ENCODE measurements at regions of chr5 and their contacts with region 1.

Region 1: DNA sequence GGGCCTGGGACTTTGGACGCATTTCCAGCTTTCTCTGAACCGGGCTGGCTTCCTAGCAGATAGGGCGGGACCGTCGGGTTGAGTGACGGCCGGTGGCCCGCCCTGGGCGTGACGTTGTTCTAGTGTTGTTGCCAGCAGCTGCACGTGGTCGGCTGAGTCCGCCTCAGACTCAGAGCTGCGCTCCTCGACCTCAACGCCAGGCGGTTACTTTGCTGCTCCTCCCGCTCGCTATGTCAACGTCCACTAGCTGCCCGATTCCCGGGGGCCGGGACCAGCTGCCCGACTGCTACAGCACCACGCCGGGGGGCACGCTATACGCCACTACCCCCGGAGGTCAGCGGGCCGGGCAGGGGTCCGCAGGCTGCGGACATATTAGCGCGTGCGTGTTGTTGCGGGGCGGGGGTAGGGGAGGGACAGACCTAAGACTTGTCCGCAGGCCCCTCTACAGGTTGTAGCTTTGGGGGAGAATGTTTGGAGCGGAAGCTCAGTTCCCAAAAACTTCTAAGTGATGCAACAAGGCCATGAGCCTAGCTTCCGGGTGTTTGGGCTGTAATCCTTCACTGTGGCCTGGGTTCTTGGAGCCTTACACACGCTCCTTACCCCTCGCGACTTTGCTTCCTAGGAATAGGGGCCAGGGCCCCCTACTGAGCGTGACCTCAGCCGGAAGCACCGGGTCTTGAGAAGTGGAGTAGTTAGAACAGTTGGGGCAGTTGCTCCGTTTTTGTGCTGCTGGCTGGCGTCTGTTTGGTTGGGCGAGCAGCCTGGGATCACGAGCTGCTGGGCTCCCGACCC is at the start of gene EIF4EBP3:
- H3K4me3 Mint-ChIP-seq: peak within 1 kb of the TSS; percentile 74
- H3K27ac Mint-ChIP-seq: peak within 1 kb of the TSS; percentile 94
- H3K4me1 Mint-ChIP-seq: peaks cover 49% of the 10 kb centered on the region
- H3K27me3 Mint-ChIP-seq: no peaks in the 10 kb centered on the region

Region 2: GRCh38 chr5:140205216-140205615 is 342.5 kb before region 1 on chr5:
- intact Hi-C with region 1: no loop called
- H3K4me3 Mint-ChIP-seq: no peak overlapping the region
- H3K27ac Mint-ChIP-seq: no peak overlapping the region
- H3K4me1 Mint-ChIP-seq: peaks cover 56% of the 10 kb centered on the region
- H3K27me3 Mint-ChIP-seq: no peaks in the 10 kb centered on the region

Region 3: GRCh38 chr5:140357726-140358093 is 190.0 kb before region 1 on chr5:
- intact Hi-C with region 1: no loop called
- H3K4me3 Mint-ChIP-seq: peak overlapping the region; percentile 55
- H3K27ac Mint-ChIP-seq: no peak overlapping the region
- H3K4me1 Mint-ChIP-seq: peaks cover 18% of the 10 kb centered on the region
- H3K27me3 Mint-ChIP-seq: peaks cover 8% of the 10 kb centered on the region

Region 4: GRCh38 chr5:140564196-140565023 is 16.7 kb after region 1 on chr5 and contains the starts of genes APBB3 and SLC35A4:
- intact Hi-C with region 1: loop called (anchors 1 kb)
- H3K4me3 Mint-ChIP-seq: peak within 1 kb of the TSS; percentile 96
- H3K27ac Mint-ChIP-seq: peak within 1 kb of the TSS; percentile 97
- H3K4me1 Mint-ChIP-seq: peaks cover 63% of the 10 kb centered on the region
- H3K27me3 Mint-ChIP-seq: no peaks in the 10 kb centered on the region

Region 5: DNA sequence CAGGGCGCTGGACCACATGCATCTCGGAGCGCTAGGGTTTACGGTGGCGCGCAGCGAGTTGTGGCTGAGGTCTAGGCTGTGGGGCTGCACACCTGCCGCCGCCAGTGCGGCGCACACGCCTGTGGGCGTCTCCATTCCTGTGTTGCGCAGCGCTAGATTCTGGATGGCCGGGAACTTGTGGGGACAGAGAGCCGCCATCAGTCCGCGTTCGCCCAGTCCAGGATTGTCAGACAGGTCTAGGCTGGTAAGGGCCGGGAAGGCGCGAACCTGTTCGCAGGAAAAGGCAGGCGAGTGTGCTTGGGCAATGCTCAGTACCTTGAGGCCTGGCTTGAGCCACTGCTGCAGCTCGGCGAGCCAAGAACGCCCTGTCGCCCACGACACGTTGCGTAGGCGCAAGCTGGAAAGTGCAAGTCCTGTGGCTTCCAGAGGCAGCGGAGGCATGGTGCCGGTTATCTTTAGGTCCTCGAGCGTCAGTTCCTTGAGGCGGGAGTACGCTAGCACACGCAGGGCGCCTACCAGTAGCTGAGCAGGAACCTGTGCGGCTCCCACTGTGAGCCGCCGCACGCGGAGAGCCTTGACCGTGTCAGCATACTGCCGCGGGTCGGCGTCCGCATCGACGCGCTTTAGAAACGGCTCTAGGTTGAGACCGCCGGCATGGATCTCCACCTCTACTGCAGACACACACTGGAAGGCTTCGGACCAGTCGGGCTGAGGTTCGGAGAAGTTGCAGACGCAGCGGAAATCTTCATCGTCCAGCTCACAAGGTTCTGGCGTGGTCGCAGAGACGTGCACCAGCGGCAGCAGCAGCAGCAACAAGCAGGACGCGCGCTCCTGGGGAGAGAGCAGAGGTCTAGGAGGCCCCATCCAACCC is 84.7 kb after region 1 on chr5:
- intact Hi-C with region 1: loop called (anchors 1 kb)
- H3K4me3 Mint-ChIP-seq: peak overlapping the region; percentile 77
- H3K27ac Mint-ChIP-seq: peak overlapping the region; percentile 84
- H3K4me1 Mint-ChIP-seq: peaks cover 43% of the 10 kb centered on the region
- H3K27me3 Mint-ChIP-seq: no peaks in the 10 kb centered on the region

Region 6: GRCh38 chr5:140639148-140639979 is 91.7 kb after region 1 on chr5 and contains the start of gene TMCO6:
- intact Hi-C with region 1: loop called (anchors 2 kb)
- H3K4me3 Mint-ChIP-seq: peak within 1 kb of the TSS; percentile 82
- H3K27ac Mint-ChIP-seq: peak within 1 kb of the TSS; percentile 83
- H3K4me1 Mint-ChIP-seq: peaks cover 56% of the 10 kb centered on the region
- H3K27me3 Mint-ChIP-seq: no peaks in the 10 kb centered on the region

Region 7: DNA sequence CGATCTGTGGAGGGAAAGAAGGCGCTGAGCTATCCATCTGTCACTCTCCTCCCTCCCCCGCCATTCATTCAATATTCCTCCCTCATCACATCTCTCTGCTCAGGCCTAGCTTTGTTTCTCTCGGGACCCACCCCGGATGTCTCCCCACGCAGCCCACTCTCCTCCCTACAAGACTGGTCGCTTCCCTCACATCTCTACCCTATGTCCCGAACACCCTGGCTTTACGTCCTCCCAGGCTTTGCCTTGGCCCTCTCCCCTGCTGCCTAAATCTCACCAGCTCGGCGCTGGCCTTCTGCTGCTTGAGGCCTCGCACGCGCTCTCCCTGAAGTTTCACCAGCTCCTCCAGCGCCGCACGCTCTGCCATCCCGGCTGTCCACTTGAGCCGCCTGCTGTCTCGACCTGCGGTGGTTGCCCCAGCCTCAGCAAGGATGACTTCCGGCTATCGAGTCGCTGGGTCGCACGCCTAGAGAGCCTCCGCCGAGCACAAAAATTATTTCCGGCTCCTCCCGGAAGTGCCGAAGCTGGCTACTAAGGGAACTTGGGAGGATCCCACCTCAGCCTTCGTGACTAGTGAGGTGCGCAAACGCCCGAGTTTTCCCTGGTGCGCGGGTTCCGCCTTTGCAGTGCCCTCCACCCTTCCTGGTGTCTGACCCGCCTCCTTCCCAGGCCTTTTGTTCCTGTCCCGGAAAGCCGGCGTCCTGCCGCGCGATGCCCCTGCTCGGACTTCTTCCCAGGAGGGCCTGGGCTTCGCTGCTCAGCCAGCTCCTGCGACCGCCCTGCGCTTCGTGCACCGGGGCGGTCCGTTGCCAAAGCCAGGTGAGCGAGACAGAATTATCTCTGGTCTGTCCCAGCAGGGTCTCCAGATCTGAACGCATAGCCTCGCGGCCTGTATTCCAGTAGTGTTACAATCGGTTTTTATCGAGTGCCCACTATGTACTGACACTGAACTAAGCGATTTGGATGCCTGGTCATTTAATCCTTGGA is 143.5 kb after region 1 on chr5 and contains the starts of genes HARS1 and HARS2:
- intact Hi-C with region 1: loop called (anchors 2 kb)
- H3K4me3 Mint-ChIP-seq: peak within 1 kb of the TSS; percentile 98
- H3K27ac Mint-ChIP-seq: peak within 1 kb of the TSS; percentile 92
- H3K4me1 Mint-ChIP-seq: peaks cover 26% of the 10 kb centered on the region
- H3K27me3 Mint-ChIP-seq: no peaks in the 10 kb centered on the region

Region 8: DNA sequence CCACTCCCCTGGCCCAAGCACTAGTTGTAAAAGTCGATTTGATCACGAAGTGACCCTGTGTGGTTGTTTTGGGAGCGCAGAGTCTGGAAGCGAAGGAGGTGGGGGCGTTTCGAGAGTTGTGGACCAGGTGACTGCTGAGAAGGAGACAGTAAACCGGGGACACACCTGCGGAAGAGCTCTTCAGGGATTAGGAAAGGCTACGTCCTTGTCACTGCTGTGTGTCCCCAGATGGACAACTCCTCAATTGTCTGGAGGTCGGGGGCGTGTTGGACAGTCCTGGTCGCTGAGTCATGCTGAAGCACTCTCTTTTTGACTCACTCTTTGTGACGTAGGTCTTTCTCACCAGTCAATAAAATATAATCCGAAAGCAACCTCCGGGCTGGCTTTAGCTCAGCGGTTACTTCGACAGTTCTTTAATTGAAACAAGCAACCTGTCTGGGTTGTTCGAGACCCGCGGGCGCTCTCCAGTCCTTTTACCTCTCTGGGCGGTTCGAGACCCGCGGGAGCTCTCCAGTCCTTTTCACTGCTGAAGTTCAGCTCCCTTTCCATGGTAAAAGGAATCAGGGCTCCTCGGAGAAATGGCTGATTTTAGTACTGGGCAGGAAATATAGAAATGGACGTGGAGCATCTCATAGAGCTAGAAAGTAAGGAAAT is 163.3 kb after region 1 on chr5:
- intact Hi-C with region 1: loop called (anchors 5 kb)
- H3K4me3 Mint-ChIP-seq: peak overlapping the region; percentile 87
- H3K27ac Mint-ChIP-seq: peak overlapping the region; percentile 95
- H3K4me1 Mint-ChIP-seq: peaks cover 33% of the 10 kb centered on the region
- H3K27me3 Mint-ChIP-seq: no peaks in the 10 kb centered on the region

Measured in dendritic cell treated with granulocyte-macrophage colony-stimulating factor and Interleukin-4, amounts not matched to agents 40 ng/mL and 50 ng/mL, for 4 days (primary cell).